Posterior cingulate gyrus (tissue), 11 donors: ENCODE measurements at regions of chr4 and their contacts with region 1.

Region 1: GRCh38 chr4:47715716-47716416 is 122.0 kb downstream of the CORIN start:
- DNase-seq: no peak

Region 2: DNA sequence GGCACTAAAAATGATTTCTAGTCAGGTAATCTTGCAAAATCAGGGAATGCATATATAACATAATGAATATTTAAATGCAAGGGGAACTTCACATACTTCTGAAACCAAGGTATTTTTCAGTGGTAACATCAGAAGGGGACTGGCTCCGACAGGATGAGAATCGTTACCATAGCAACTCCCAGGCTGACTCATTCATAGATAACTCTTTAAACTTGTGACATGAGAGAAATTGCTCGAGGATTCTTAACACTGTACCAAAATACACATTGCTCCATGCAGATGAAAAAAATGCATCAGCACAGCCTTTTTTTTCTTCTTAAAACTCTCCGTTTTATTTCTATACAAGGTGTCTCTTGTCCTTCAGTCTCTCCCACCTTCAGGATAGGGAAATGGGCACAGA is 570.2 kb before region 1 on chr4:
- intact Hi-C with region 1: loop called (anchors 10 kb)
- DNase-seq: no peak

Region 3: GRCh38 chr4:47801481-47802002 is 85.7 kb after region 1 on chr4:
- intact Hi-C with region 1: no loop called
- DNase-seq: peak in 1 of 10 donors; percentile 33